ENCODE measurements at regions of chr11 and their contacts with region 1.

Region 1: GRCh38 chr11:67345920-67346799 is 7.2 kb downstream of the POLD4 start:
- DNase-seq: no peak
- H3K4me3 ChIP-seq: no peak overlapping the region
- H3K27ac ChIP-seq: no peak overlapping the region
- H3K4me1 ChIP-seq: no peaks in the 10 kb centered on the region
- H3K27me3 ChIP-seq: no peaks in the 10 kb centered on the region
- CTCF ChIP-seq: peak in 3 of 4 experiments; percentile 23 to 36 (median 26)
- POLR2A ChIP-seq: no peak

Region 2: DNA sequence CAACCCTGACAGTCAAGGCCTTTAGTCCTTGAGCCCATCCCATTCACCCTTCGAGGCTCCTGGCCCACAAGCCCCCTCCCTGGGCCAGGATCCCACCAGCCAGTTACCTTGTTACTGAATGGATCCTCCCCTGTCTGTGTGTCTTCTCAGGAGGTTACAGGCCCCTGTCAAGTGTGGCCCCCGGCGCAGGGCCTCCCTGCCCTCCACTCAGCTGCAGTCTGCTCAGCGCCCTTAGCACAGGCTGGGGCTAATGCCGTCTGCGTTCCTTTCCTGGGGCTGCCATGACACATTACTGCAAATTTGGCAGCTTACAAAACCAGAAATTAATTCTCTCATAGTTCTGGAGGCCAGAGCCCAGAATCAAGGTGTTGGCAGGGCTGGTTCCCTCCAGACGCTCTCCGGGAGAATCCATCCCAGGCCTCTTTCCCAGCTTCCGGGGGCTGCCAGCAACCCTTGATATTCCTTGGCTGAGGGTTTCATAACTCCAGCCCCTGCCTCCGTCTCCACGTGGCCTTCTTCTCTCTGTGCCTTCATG is 332.6 kb before region 1 on chr11:
- intact Hi-C with region 1: no loop called
- DNase-seq: no peak
- H3K4me3 ChIP-seq: no peak overlapping the region
- H3K27ac ChIP-seq: no peak overlapping the region
- H3K4me1 ChIP-seq: no peaks in the 10 kb centered on the region
- H3K27me3 ChIP-seq: no peaks in the 10 kb centered on the region
- CTCF ChIP-seq: no peak
- POLR2A ChIP-seq: no peak

Region 3: DNA sequence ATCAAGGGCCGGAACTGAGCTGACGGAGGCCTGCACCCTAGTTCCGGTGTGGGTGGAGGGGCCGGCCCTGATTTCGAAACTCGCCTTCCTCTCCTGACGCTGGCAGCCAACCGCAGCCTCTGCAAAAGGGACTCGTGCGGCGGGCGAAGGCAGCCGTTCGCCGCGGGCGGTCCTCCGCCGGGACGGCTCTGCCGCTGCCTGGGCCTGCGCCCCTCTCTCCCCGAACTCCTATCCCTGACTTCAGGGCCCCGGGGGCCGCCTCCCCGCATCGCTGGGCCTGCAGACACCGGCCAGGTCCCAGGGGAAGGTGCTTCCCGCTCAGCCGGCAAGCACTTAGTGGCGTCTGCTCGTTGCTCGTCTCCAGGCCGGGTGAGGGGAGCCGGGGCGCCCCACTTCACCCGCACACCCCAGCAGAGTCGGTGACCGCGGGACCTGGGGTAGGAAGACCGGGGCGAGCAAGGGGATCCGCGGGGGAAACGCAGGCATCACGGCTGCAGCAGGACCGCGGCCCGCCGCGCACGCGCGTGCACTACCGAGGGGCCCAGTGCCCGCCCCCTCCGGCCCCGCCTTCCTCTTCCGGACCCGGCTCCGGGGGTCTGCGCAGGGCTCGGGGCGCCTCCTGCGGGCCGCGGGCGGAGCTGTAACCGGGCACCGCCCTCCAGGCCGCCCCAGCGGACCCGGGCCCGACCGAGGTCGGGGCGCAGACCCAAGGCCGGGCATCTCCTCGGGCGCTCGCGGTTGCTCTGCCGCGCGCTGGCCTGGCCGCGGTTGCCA is 57.5 kb before region 1 on chr11:
- intact Hi-C with region 1: no loop called
- DNase-seq: peak; percentile 88
- H3K4me3 ChIP-seq: peak overlapping the region; percentile 80 to 94
- H3K27ac ChIP-seq: peak overlapping the region; percentile 89 to 93
- H3K4me1 ChIP-seq: peaks cover 7 to 10% of the 10 kb centered on the region in 2 donors
- H3K27me3 ChIP-seq: no peaks in the 10 kb centered on the region
- CTCF ChIP-seq: peak; percentile 8 to 76 (median 60)
- POLR2A ChIP-seq: peak in 1 of 2 donors; percentile 74

Region 4: GRCh38 chr11:67389477-67389876 is 43.3 kb after region 1 on chr11:
- intact Hi-C with region 1: loop called (anchors 5 kb)
- DNase-seq: no peak
- H3K4me3 ChIP-seq: no peak overlapping the region
- H3K27ac ChIP-seq: no peak overlapping the region
- H3K4me1 ChIP-seq: no peaks in the 10 kb centered on the region
- H3K27me3 ChIP-seq: no peaks in the 10 kb centered on the region
- CTCF ChIP-seq: peak in 3 of 4 experiments; percentile 35 to 55 (median 54)
- POLR2A ChIP-seq: no peak